ENCODE measurements at regions of chr16 and their contacts with region 1.

Region 1: DNA sequence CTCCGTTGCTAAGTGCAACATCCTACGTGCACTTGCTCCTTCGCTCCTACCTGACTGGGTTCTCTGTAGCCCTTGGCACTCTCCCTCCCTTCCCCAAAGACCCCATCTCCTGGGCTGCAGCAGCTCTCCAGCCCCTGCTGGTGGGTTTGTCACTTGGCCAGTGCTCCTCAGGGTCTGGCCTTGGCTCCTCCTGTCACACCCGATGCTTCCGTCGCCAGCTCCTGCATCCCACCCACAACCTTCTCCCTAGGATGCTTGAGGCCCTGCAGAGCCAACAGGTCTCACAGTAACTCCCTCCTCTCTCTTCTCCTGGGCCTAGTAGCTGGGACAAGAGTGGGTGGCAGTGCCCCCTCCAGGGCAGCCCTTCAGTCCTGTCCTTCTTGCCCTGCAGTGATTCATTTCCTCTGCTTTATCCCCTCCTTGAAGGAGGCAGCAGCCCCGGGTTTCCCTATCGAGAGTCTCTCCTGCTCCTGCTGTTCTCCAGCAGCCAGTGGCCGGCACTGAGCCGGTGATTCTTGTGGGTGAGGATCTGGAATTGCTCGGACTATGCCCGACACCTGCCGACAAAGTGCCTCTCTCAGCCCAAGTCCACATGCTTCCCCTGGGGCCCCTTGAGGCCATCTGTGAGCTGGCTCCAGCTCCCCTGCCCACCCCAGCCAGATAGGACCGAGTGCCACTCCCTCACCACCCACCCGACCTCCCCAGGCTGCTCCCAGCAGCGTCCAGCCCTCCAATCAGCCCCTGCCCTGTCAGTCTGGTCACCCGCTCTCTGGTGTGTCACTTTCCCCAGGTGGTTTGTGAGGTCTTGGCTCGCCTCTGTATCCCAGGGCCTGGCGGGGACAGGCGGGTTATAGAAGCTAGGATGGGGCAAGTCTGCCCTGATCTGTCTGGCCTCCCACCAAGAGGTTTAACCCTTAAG is 3.8 kb downstream of the LITAFD start:
- DNase-seq: no peak
- H3K4me3 ChIP-seq: no peak overlapping the region
- H3K27ac ChIP-seq: no peak overlapping the region
- H3K4me1 ChIP-seq: peaks cover 0 to 16% (median 7%) of the 10 kb centered on the region in 4 donors
- H3K27me3 ChIP-seq: peaks cover 0 to 8% of the 10 kb centered on the region in 2 donors
- CTCF ChIP-seq: no peak

Region 2: GRCh38 chr16:8346278-8346677 is 539.7 kb before region 1 on chr16:
- intact Hi-C with region 1: no loop called
- DNase-seq: no peak
- H3K4me3 ChIP-seq: no peak overlapping the region
- H3K27ac ChIP-seq: no peak overlapping the region
- H3K4me1 ChIP-seq: no peaks in the 10 kb centered on the region
- H3K27me3 ChIP-seq: no peaks in the 10 kb centered on the region
- CTCF ChIP-seq: no peak

Region 3: GRCh38 chr16:8567750-8568617 is 317.9 kb before region 1 on chr16:
- intact Hi-C with region 1: loop called (anchors 5 kb)
- DNase-seq: peak; percentile 57 to 84
- H3K4me3 ChIP-seq: no peak overlapping the region
- H3K27ac ChIP-seq: no peak overlapping the region
- H3K4me1 ChIP-seq: peaks cover 0 to 21% (median 7%) of the 10 kb centered on the region in 4 donors
- H3K27me3 ChIP-seq: peaks cover 0 to 27% of the 10 kb centered on the region in 2 donors
- CTCF ChIP-seq: peak; percentile 98 to 99

Region 4: GRCh38 chr16:8660841-8661301 is 225.1 kb before region 1 on chr16:
- intact Hi-C with region 1: loop called (anchors 5 kb)
- DNase-seq: peak; percentile 41 to 78
- H3K4me3 ChIP-seq: no peak overlapping the region
- H3K27ac ChIP-seq: no peak overlapping the region
- H3K4me1 ChIP-seq: no peaks in the 10 kb centered on the region
- H3K27me3 ChIP-seq: no peaks in the 10 kb centered on the region
- CTCF ChIP-seq: peak; percentile 49 to 67

Region 5: GRCh38 chr16:8982816-8983215 is 96.9 kb after region 1 on chr16:
- intact Hi-C with region 1: no loop called
- DNase-seq: no peak
- H3K4me3 ChIP-seq: no peak overlapping the region
- H3K27ac ChIP-seq: no peak overlapping the region
- H3K4me1 ChIP-seq: no peaks in the 10 kb centered on the region
- H3K27me3 ChIP-seq: peaks cover 0 to 12% of the 10 kb centered on the region in 2 donors
- CTCF ChIP-seq: no peak